Breast epithelium (tissue), 4 donors: ENCODE measurements at regions of chr22 and their contacts with region 1.

Region 1: DNA sequence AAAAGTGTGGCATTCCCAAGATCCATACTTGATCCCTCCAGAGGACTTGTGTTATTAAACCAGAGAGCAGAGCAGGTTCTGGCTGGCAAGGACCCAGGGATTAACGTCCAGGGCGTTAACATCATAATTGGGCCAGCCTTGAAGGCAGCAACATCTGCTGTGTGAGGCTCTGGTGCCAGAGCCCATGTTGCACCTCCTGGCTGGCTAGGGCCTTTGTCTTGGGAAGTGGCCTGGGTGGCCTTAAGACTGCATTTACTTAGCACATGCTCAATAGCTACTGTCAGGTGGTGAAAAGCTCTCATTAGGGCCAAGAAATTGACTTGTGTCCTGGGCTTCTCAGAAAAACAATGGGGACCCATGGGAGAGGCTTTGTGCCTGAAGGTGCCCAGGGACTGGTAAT is 66.6 kb downstream of the CACNG2 start:
- DNase-seq: no peak
- H3K4me3 ChIP-seq: no peak overlapping the region
- H3K27ac ChIP-seq: no peak overlapping the region
- H3K4me1 ChIP-seq: no peaks in the 10 kb centered on the region
- H3K27me3 ChIP-seq: peaks cover 0 to 47% of the 10 kb centered on the region in 2 donors
- CTCF ChIP-seq: no peak
- POLR2A ChIP-seq: no peak

Region 2: GRCh38 chr22:37222440-37222971 is 585.6 kb after region 1 on chr22:
- intact Hi-C with region 1: loop called (anchors 5 kb)
- DNase-seq: no peak
- H3K4me3 ChIP-seq: no peak overlapping the region
- H3K27ac ChIP-seq: no peak overlapping the region
- H3K4me1 ChIP-seq: no peaks in the 10 kb centered on the region
- H3K27me3 ChIP-seq: no peaks in the 10 kb centered on the region
- CTCF ChIP-seq: no peak
- POLR2A ChIP-seq: no peak